HepG2 (cell line): ENCODE measurements at regions of chr9 and their contacts with region 1.

Region 1: GRCh38 chr9:93058355-93059096 is at the start of gene SUSD3:
- DNase-seq: peak; percentile 54
- ATAC-seq: peak; percentile 33
- H3K4me3 ChIP-seq: peak within 1 kb of the TSS; percentile 28 to 64 (median 35); a peak in 5 of 6 replicates
- H3K27ac ChIP-seq: peak within 1 kb of the TSS; percentile 36
- H3K4me1 ChIP-seq: peaks cover 78% of the 10 kb centered on the region
- H3K27me3 ChIP-seq: peaks cover 8 to 16% of the 10 kb centered on the region in 2 experiments; a peak in 3 of 5 replicates
- CTCF ChIP-seq: no peak
- EP300 ChIP-seq: no peak
- POLR2A ChIP-seq: peak in 1 of 2 experiments; percentile 55; a peak in 2 of 4 replicates
- RAD21 ChIP-seq: no peak
- total RNA-seq, gene SUSD3: 6.0 and 7.0 TPM in 2 replicates

Region 2: GRCh38 chr9:93003552-93004407 is 54.7 kb before region 1 on chr9:
- CTCF ChIA-PET with region 1: no interaction called
- POLR2A ChIA-PET with region 1: interaction called, 3 read pairs
- in situ Hi-C with region 1: no loop called
- intact Hi-C with region 1: loop called (anchors 5 kb)
- DNase-seq: peak; percentile 41
- ATAC-seq: peak; percentile 95
- H3K4me3 ChIP-seq: no peak overlapping the region
- H3K27ac ChIP-seq: no peak overlapping the region
- H3K4me1 ChIP-seq: peaks cover 15% of the 10 kb centered on the region
- H3K27me3 ChIP-seq: no peaks in the 10 kb centered on the region
- CTCF ChIP-seq: peak; percentile 88
- EP300 ChIP-seq: no peak
- POLR2A ChIP-seq: no peak
- RAD21 ChIP-seq: peak; percentile 73

Region 3: DNA sequence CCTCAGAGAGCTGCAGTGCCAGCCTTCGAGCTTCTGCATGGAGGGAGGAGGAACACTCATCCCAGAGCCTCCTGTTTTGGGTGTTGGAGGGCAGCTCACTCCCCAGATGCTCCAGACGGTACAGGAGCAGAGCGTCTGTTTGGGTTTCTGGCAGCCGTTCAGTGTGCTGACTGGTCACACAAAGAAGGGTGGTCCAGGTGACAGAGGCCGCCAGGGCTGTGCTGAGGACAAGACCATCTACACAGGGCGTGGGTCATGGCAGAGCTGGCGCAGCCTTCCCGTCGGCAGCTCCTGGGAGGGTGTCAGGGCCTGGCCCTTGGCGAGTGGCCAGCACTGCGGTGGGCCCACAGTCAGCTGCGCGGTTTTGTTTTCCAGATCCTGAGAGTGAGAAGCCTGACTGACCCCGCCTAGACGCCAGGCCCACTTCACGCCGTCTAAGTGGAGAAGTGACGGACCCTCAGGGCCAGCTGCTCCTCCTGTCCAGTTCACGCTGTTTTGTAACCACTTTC is 261.5 kb after region 1 on chr9:
- CTCF ChIA-PET with region 1: no interaction called
- POLR2A ChIA-PET with region 1: no interaction called
- in situ Hi-C with region 1: no loop called
- intact Hi-C with region 1: no loop called
- DNase-seq: no peak
- ATAC-seq: no peak
- H3K4me3 ChIP-seq: no peak overlapping the region
- H3K27ac ChIP-seq: no peak overlapping the region
- H3K4me1 ChIP-seq: peaks cover 32% of the 10 kb centered on the region
- H3K27me3 ChIP-seq: no peaks in the 10 kb centered on the region; a peak in 1 of 5 replicates
- CTCF ChIP-seq: no peak
- EP300 ChIP-seq: no peak
- POLR2A ChIP-seq: no peak
- RAD21 ChIP-seq: no peak